ENCODE measurements at regions of chrX and their contacts with region 1.

Region 1: GRCh38 chrX:48508400-48509244 is at the start of gene PORCN:
- DNase-seq: peak; percentile 73
- H3K4me3 Mint-ChIP-seq: peak within 1 kb of the TSS; percentile 93
- H3K27ac Mint-ChIP-seq: peak within 1 kb of the TSS; percentile 90
- H3K4me1 Mint-ChIP-seq: peaks cover 21% of the 10 kb centered on the region
- H3K27me3 Mint-ChIP-seq: no peaks in the 10 kb centered on the region
- total RNA-seq, gene PORCN: 13.6 and 15.1 TPM in 2 replicates

Region 2: GRCh38 chrX:48468693-48469691 is 39.6 kb before region 1 on chrX:
- intact Hi-C with region 1: loop called (anchors 2 kb)
- DNase-seq: no peak
- H3K4me3 Mint-ChIP-seq: peak overlapping the region; percentile 97
- H3K27ac Mint-ChIP-seq: peak overlapping the region; percentile 91
- H3K4me1 Mint-ChIP-seq: peaks cover 28% of the 10 kb centered on the region
- H3K27me3 Mint-ChIP-seq: peaks cover 2% of the 10 kb centered on the region

Region 3: DNA sequence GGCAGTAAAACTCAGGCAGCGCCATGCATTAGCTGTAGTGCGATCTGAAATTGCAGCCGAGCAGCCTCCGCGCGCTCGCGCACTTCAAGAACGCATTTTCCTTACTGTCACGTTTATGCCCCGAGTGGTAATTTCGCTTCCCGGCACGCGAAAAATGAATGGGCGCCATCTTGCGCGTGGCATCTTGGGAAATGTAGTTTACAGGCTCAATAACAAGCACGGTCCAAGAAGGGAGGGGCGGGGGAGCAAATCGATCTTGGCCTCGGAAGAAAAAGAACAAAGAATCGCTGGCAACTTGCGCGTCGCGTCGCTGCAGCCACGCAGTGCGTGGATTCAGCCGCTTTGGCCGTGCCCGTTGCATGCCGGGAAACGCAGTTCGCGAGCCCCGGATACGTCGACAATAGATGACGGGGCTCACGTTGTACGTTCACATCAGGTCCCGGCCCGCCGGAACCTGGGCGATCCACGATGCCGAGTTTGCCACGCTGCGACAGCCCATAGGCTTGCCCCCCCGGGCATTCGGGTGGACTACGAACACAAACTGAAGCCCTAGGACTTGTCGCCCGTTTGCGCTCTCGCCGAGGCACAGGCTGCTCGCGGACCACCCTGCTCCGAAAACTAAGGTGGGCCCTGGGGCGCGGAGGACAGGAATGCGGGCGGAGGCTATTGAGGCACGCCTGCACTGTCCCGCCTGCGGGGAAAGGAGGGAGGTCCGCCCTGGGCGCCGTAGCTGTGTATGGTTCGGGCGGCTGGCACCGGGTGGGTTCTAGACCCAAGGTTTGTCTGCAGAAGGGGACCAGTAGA is 32.6 kb before region 1 on chrX and contains the start of gene FTSJ1:
- intact Hi-C with region 1: loop called (anchors 1 kb)
- DNase-seq: peak; percentile 86
- H3K4me3 Mint-ChIP-seq: peak within 1 kb of the TSS; percentile 98
- H3K27ac Mint-ChIP-seq: peak within 1 kb of the TSS; percentile 90
- H3K4me1 Mint-ChIP-seq: peaks cover 20% of the 10 kb centered on the region
- H3K27me3 Mint-ChIP-seq: peaks cover 2% of the 10 kb centered on the region
- total RNA-seq, gene FTSJ1: 96.2 and 103 TPM in 2 replicates

Region 4: DNA sequence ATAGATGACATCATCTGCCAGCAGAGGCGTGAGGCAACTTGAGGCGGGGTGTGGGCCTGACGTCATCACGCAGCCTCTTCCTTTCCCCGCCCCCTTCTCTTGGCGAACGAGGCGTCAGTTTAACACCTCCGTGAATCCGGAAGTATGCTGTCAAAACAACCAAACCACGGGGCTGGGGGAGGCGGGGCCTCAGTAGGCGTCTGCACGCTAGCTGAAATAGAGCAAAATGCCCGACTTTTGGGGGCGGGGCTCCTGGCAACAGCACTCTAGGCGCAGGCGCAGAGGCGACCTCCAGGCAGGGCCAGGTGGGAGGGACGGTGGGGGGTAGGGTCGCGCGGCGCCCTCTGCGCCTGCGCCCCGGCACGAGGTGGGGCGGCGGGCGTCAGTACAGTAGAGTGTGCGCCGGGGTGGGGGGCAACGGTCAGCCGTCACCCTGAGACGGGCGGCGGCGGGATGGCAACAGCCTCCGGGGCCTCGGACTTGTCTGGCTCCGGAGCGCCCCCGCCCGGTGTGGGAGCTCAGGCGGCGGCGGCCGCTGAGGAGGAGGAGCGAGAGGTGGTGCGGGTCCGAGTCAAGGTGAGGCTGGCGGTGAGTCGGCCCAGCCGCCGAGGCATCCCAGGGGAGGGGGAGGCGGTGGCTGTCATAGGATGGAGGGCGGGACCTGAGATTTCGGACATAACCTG is 30.9 kb after region 1 on chrX and contains the start of gene TBC1D25:
- intact Hi-C with region 1: loop called (anchors 5 kb)
- DNase-seq: peak; percentile 93
- H3K4me3 Mint-ChIP-seq: peak within 1 kb of the TSS; percentile 94
- H3K27ac Mint-ChIP-seq: peak within 1 kb of the TSS; percentile 92
- H3K4me1 Mint-ChIP-seq: peaks cover 17% of the 10 kb centered on the region
- H3K27me3 Mint-ChIP-seq: no peaks in the 10 kb centered on the region
- total RNA-seq, gene TBC1D25: 13.5 and 16.0 TPM in 2 replicates

Region 5: GRCh38 chrX:48574270-48575266 is 65.9 kb after region 1 on chrX and contains the start of gene RBM3:
- intact Hi-C with region 1: loop called (anchors 1 kb)
- DNase-seq: peak; percentile 89
- H3K4me3 Mint-ChIP-seq: peak within 1 kb of the TSS; percentile 99
- H3K27ac Mint-ChIP-seq: peak within 1 kb of the TSS; percentile 100
- H3K4me1 Mint-ChIP-seq: peaks cover 19% of the 10 kb centered on the region
- H3K27me3 Mint-ChIP-seq: no peaks in the 10 kb centered on the region
- total RNA-seq, gene RBM3: 318 and 338 TPM in 2 replicates

Measured in activated T-helper 1 cell treated with anti-CD3 and anti-CD28 coated beads, Interleukin-12 subunit alpha, Interleukin-12 subunit beta, Interleukin-2, Interleukin-4 antibody, amounts not matched to agents 30 ng/mL and 10 ng/mL and 1 ng/mL, durations not matched to agents 14 hours and 24 hours and 36 hours (primary cell).